Head of caudate nucleus (tissue), 42 donors: ENCODE measurements at regions of chr10 and their contacts with region 1.

Region 1: DNA sequence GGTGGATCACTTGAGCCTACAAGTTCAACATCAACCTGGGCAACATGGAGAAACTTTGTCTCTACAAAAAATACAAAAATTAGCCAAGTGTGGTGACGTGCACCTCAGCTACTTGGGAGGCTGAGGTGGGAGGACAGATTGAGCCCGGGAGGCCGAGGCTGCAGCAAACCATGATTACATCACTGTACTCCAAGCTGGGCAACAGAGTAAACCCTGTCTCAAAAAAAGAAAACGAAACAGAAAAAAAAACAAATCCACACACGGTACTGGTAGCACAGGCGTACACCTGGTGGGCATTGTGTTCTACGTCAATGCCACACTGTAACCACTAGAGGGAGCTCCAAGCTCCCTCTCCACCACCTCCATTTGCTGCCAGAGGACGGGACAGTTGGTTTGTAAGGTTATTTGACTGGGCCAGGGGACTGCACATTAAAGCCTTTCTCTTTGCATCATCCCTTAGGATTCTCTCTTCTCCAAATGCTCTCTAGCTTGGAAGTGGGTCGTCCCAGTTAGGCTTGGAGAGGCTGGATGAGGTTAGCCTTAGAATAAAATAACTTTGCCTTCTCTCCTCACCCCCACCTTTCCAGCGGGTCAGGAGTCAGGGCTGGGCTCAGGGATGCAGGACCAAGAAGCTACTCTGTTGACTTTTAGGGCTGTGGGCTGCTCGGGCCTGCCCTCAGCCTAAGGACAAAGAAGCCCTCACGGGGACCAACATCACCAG is 130.8 kb downstream of the SORBS1 start:
- DNase-seq: peak in 25 of 42 donors; percentile 40 to 80 (median 61)

Region 2: GRCh38 chr10:95559471-95559870 is 129.1 kb after region 1 on chr10:
- intact Hi-C with region 1: loop called (anchors 5 kb)
- DNase-seq: peak in 4 of 42 donors; percentile 25 to 50 (median 32)

Region 3: GRCh38 chr10:95601116-95601719 is 170.8 kb after region 1 on chr10:
- intact Hi-C with region 1: loop called (anchors 2 kb)
- DNase-seq: peak; percentile 61 to 91 (median 80)